GM10248 (cell line): ENCODE measurements at regions of chr14 and their contacts with region 1.

Region 1: DNA sequence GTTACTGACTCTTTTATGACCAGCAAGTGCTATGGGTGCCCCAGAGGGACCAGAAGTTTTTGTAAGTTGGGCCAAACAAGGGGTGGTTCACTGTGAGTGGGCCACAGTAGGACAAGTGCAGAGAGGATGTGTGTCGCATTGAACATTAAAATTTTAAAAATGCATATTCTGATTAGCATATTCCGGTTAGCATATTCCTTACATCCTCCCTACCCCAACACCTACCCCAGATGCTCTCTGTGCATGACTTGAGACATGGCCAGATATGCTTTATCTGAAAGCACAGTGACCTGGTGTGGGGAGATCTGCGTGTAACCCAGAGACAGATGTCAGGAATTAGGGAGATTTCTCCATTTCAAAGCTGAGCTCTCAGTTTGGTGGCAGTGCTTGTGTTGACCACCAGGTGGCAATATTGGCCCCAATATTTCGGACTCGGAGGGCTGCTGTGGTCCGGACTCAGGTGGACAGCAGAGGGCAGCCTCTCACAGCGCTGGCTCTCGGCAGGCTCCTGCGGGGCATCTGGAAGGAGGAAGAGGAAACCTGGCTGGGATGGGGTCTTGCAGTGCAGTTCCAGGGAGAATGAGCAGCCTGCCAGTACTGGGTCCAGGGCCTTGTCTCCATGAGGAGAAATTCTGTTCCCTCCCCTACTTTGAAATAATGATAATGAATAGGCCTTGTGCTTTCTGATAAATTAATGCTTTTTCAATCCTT is 1.6 kb upstream of the CEBPE start:
- DNase-seq: peak; percentile 90
- CTCF ChIP-seq: peak; percentile 100

Region 2: DNA sequence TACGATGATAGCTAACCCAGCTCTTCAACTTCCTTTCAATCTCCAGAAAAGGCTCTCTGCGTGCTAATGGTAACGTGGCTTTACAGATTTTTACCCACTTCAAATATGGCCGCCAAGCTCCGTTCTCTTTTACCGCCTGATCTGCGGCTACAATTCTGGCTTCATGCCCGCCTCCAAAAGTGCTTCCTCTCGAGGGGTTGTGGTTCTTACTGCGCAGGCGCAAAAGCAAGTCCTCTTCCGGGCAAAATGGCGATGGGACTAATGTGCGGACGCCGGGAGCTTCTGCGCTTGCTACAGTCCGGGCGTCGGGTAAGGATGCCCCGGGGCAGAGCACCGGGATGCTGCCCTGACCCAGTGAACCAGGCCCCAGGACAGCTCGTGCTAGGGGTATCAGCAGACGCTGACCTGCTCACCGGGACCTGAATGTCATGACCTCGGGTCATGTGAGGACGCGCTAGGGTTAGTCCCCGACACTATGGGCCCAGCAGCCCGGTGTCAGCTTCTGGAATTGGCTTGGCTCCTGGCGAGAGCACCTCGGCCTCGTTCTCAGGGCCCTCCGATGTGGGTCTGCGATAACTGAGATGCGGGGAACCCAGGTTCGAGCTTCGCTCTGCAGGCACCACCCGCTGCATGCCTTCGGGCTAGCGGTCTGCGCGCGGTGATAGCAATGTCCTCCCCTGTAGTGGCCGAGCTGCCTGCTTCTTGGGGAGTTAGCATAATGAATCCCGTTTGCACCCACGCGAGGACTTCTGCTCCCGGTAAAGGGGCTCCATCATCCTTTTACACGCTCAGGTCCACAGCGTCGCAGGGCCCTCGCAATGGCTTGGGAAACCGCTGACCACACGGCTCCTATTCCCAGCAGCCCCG is 354.0 kb before region 1 on chr14 and contains the start of gene OXA1L:
- CTCF ChIA-PET with region 1: no interaction called
- POLR2A ChIA-PET with region 1: no interaction called
- DNase-seq: peak; percentile 91
- CTCF ChIP-seq: no peak

Region 3: DNA sequence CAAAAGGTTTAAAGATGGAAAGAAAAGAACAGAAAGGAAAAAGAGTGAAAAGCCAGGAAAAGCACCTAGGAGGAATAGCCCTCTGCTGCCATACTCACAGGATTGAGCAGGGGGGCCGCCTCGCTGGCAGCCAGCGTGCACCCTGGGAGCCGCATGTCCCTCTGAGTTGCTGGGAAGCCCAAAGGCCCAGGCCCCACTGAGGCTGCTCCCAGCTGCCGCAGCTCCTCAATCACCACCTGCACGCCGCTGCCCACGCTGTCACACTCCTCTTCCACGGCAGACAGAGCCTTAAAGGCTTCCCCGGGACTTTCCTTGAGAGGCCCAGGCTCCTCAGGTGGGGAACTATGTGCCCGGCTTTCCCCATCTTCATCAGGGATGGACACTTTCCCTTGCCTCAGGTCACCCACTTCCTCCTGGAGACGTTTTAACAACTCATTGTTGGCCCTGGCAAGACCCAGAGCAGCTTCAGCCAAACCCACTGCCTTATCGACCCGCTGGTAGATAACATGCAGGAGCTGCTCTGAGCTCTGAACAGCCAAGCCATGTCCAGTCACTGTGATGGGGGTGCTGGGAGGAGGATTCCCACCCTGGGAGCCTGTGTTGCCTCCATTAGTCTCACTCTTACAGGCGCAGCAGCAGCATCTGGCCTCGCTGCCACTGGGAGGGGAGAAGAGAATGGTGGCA is 122.2 kb before region 1 on chr14:
- CTCF ChIA-PET with region 1: no interaction called
- POLR2A ChIA-PET with region 1: no interaction called
- DNase-seq: no peak
- CTCF ChIP-seq: no peak

Region 4: GRCh38 chr14:23076785-23077408 is 43.8 kb before region 1 on chr14:
- CTCF ChIA-PET with region 1: interaction called, 16 read pairs
- POLR2A ChIA-PET with region 1: no interaction called
- DNase-seq: no peak
- CTCF ChIP-seq: peak; percentile 47

Region 5: GRCh38 chr14:23130871-23131270 is 10.2 kb after region 1 on chr14:
- CTCF ChIA-PET with region 1: interaction called, 44 read pairs
- POLR2A ChIA-PET with region 1: no interaction called
- DNase-seq: no peak
- CTCF ChIP-seq: no peak

Region 6: GRCh38 chr14:23162800-23163199 is 42.1 kb after region 1 on chr14:
- CTCF ChIA-PET with region 1: interaction called, 10 read pairs
- POLR2A ChIA-PET with region 1: no interaction called
- DNase-seq: no peak
- CTCF ChIP-seq: no peak

Region 7: DNA sequence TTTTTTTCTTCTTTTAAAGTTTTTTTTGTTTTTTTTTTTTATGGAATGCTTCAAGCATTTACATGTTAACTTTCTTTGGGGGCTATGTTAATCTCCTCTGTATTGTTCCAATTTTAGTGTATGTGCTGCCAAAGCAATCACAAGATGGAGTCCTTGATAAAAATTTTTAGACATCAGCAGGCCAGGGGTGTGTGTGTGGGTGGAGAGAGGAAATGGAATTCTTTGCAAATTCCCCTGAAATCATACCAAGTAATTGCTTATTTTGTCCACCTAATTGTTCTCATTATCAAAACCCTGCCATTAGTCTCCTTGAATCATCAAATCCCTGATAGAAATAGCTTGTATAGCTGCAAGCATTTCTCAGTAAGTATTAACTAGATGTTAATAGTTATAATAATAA is 138.7 kb after region 1 on chr14:
- CTCF ChIA-PET with region 1: interaction called, 12 read pairs
- POLR2A ChIA-PET with region 1: no interaction called
- DNase-seq: no peak
- CTCF ChIP-seq: no peak

Region 8: GRCh38 chr14:23301288-23301968 is 180.7 kb after region 1 on chr14:
- CTCF ChIA-PET with region 1: interaction called, 27 read pairs
- POLR2A ChIA-PET with region 1: interaction called, 3 read pairs
- DNase-seq: peak; percentile 97
- CTCF ChIP-seq: peak; percentile 85